Caco-2 (cell line): ENCODE measurements at regions of chr6 and their contacts with region 1.

Region 1: DNA sequence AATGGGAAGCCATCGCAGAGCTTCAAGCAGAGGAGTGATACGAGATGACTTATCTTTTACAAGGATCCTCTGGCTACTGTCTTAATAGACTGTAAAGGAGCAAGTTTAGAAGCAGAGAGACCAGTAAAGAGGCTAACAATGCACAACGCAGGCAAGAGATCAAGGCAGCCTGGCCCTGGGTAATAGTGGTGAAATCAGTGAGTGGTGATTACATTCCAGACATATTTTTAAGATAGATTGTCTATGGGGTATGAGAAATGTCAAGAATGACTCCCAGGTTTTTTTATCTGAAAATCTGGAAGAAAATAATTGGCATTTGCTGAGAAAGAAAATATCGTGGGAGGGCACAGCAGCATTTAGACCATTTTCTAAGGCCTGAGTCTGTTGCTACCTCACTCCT is 213.6 kb upstream of the HTR1E start:
- DNase-seq: peak; percentile 55 to 67
- H3K4me3 ChIP-seq: no peak overlapping the region
- H3K4me3 Mint-ChIP-seq: peak overlapping the region; percentile 25
- H3K27ac Mint-ChIP-seq: peak overlapping the region; percentile 82
- H3K4me1 ChIP-seq: peaks cover 36% of the 10 kb centered on the region
- H3K4me1 Mint-ChIP-seq: peaks cover 16% of the 10 kb centered on the region
- H3K27me3 ChIP-seq: no peaks in the 10 kb centered on the region
- H3K27me3 Mint-ChIP-seq: no peaks in the 10 kb centered on the region
- CTCF ChIP-seq: no peak

Region 2: DNA sequence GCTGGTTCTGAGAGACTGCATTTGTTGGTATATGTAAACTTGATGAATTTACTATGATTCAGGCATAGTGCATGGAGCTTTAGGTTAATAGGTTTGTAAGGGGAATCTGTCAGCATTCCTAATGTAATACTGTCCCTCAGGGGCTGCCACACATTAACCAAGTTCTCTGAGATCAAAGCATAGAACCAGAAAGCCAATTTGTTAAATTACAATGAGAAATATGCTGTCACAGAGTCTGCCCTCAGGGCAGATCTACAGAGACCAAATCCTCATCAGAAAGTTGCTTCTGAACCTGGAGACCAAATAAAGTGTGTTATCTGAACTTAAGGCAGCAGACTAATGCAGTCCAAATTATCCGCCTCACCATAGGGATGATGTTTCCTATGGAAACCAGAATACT is 37.2 kb before region 1 on chr6:
- CTCF ChIA-PET with region 1: no interaction called
- POLR2A ChIA-PET with region 1: no interaction called
- intact Hi-C with region 1: loop called (anchors 2 kb)
- DNase-seq: peak; percentile 45 to 46
- H3K4me3 ChIP-seq: no peak overlapping the region
- H3K4me3 Mint-ChIP-seq: no peak overlapping the region
- H3K27ac Mint-ChIP-seq: no peak overlapping the region
- H3K4me1 ChIP-seq: peaks cover 7% of the 10 kb centered on the region; the same call in 1 of the 2 replicates
- H3K4me1 Mint-ChIP-seq: peaks cover 9% of the 10 kb centered on the region
- H3K27me3 ChIP-seq: no peaks in the 10 kb centered on the region
- H3K27me3 Mint-ChIP-seq: no peaks in the 10 kb centered on the region
- CTCF ChIP-seq: no peak

Region 3: GRCh38 chr6:86789779-86790411 is 66.2 kb after region 1 on chr6:
- CTCF ChIA-PET with region 1: no interaction called
- POLR2A ChIA-PET with region 1: no interaction called
- intact Hi-C with region 1: loop called (anchors 5 kb)
- DNase-seq: no peak
- H3K4me3 ChIP-seq: no peak overlapping the region
- H3K4me3 Mint-ChIP-seq: no peak overlapping the region
- H3K27ac Mint-ChIP-seq: no peak overlapping the region
- H3K4me1 ChIP-seq: peaks cover 15% of the 10 kb centered on the region
- H3K4me1 Mint-ChIP-seq: peaks cover 15% of the 10 kb centered on the region
- H3K27me3 ChIP-seq: no peaks in the 10 kb centered on the region
- H3K27me3 Mint-ChIP-seq: no peaks in the 10 kb centered on the region
- CTCF ChIP-seq: no peak